Posterior vena cava (tissue), 2 donors: ENCODE measurements at regions of chr7 and their contacts with region 1.

Region 1: GRCh38 chr7:117993377-117994003 is 120.2 kb upstream of the CTTNBP2 start:
- DNase-seq: no peak

Region 2: DNA sequence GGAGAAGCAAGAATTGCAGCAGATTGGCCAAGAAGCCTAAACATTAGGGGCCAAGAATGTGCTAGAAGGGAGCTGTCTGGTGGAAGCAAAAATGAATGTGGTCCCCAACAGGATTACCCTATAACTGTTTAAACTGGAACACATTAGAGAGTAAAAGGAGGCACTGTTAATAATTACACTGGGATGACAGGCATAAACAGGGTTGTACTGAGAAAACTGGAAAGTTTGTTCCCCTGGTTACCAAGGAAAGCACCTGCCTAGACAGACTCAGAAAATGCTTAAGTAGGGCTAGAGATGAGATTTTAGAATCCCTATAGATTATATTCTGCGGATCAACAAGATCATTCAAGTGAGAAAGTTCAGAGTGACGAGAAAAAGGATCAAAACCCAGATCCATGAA is 221.1 kb before region 1 on chr7:
- intact Hi-C with region 1: loop called in 1 of 2 experiments (anchors 5 kb)
- DNase-seq: no peak